CD4-positive, alpha-beta T cell (primary cell): ENCODE measurements at regions of chr5 and their contacts with region 1.

Region 1: GRCh38 chr5:180802325-180803180 is at the start of gene MGAT1:
- DNase-seq: peak; percentile 48 to 89 (median 70)
- ATAC-seq: peak; percentile 49
- H3K4me3 ChIP-seq: peak within 1 kb of the TSS; percentile 84
- H3K4me3 Mint-ChIP-seq: peak within 1 kb of the TSS; percentile 99
- H3K27ac ChIP-seq: peak within 1 kb of the TSS; percentile 84 to 87
- H3K27ac Mint-ChIP-seq: peak within 1 kb of the TSS; percentile 94
- H3K4me1 ChIP-seq: peaks cover 86% of the 10 kb centered on the region
- H3K4me1 Mint-ChIP-seq: peaks cover 89% of the 10 kb centered on the region
- H3K27me3 ChIP-seq: no peaks in the 10 kb centered on the region
- H3K27me3 Mint-ChIP-seq: no peaks in the 10 kb centered on the region
- CTCF ChIP-seq: no peak
- total RNA-seq, gene MGAT1: 49.0 to 60.2 TPM

Region 2: DNA sequence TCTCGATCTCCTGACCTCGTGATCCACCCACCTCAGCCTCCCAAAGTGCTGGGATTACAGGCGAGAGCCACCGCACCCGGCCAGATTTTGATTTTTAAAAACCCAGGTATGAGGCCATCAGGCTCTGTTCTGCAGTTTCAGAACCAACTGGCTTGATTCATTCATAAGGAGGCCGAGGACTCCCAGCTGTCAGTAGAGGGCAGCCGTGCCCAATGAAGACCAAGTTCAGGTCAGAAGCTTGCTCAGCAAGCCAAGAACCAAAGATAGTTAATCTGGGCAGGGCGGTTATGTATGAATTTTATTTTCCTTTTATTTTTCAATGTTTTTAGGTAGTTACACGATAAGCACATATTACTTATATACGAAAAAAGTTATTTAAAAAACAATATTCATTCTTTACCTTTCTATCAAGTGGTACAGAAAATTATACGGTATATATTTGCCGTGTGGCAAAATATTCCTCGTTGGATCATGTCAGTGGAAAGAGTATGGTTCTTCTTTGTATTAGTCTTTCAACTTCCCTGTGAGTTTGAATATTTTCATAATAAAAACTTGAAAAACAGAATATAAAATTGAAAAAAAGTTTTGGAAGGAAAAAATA is 18.0 kb before region 1 on chr5:
- CTCF ChIA-PET with region 1: interaction called, 10 read pairs
- POLR2A ChIA-PET with region 1: interaction called, 38 read pairs
- intact Hi-C with region 1: loop called (anchors 2 kb)
- DNase-seq: peak; percentile 59 to 86 (median 74)
- ATAC-seq: peak; percentile 90
- H3K4me3 ChIP-seq: no peak overlapping the region
- H3K4me3 Mint-ChIP-seq: no peak overlapping the region
- H3K27ac ChIP-seq: no peak overlapping the region
- H3K27ac Mint-ChIP-seq: peak overlapping the region; percentile 85
- H3K4me1 ChIP-seq: peaks cover 31% of the 10 kb centered on the region
- H3K4me1 Mint-ChIP-seq: peaks cover 45% of the 10 kb centered on the region
- H3K27me3 ChIP-seq: no peaks in the 10 kb centered on the region
- H3K27me3 Mint-ChIP-seq: no peaks in the 10 kb centered on the region
- CTCF ChIP-seq: peak; percentile 69

Region 3: DNA sequence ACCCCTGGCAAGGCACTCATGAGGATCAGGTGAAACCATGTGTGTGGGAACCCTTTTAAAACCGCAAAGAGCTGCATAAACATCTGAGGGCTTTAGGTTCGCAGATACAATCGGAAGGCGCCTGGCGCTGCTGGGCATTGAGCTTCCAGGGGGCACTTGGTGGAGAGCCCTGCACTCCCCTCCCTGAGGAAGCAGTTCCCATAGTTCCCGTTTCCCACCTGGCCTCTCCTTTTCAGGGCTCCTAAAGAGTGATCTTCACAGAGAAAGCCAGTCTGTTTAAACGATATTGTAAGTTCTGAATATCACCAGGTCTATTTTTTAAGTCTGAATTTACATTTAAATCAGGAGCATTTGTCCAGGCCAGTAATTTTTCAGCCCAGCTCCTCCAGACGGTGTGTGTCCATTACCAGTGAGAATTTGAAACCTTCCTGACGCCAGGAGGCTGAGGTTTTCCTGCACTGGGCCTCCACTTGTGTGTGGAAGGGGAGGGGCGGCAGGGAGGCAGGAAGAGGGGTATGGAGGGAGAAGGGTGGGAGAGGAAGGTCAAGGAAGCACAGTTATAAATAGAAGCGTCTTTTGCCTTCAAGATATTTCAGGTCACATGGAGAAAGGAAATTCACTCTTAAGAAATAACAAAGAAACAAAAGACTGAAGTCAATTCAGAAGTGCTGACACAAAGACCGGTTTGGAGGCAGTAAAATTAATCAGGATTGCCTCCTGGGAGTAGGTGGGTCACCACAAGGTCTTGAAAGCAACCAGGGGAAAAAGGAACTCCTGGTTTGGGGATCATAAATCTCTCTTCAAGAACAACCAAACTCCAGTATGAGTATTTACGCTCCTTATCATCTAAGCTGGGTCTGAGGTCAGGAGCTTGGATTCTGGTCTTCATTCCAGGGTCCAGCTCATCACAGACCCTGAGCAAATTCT is 14.3 kb after region 1 on chr5:
- CTCF ChIA-PET with region 1: interaction called, 5 read pairs
- POLR2A ChIA-PET with region 1: interaction called, 54 read pairs
- intact Hi-C with region 1: no loop called
- DNase-seq: peak in 3 of 14 experiments; percentile 31 to 59 (median 59)
- ATAC-seq: peak; percentile 71
- H3K4me3 ChIP-seq: peak overlapping the region; percentile 5
- H3K4me3 Mint-ChIP-seq: peak overlapping the region; percentile 79
- H3K27ac ChIP-seq: no peak overlapping the region
- H3K27ac Mint-ChIP-seq: peak overlapping the region; percentile 80
- H3K4me1 ChIP-seq: peaks cover 22% of the 10 kb centered on the region
- H3K4me1 Mint-ChIP-seq: peaks cover 50% of the 10 kb centered on the region
- H3K27me3 ChIP-seq: no peaks in the 10 kb centered on the region
- H3K27me3 Mint-ChIP-seq: no peaks in the 10 kb centered on the region
- CTCF ChIP-seq: no peak

Region 4: DNA sequence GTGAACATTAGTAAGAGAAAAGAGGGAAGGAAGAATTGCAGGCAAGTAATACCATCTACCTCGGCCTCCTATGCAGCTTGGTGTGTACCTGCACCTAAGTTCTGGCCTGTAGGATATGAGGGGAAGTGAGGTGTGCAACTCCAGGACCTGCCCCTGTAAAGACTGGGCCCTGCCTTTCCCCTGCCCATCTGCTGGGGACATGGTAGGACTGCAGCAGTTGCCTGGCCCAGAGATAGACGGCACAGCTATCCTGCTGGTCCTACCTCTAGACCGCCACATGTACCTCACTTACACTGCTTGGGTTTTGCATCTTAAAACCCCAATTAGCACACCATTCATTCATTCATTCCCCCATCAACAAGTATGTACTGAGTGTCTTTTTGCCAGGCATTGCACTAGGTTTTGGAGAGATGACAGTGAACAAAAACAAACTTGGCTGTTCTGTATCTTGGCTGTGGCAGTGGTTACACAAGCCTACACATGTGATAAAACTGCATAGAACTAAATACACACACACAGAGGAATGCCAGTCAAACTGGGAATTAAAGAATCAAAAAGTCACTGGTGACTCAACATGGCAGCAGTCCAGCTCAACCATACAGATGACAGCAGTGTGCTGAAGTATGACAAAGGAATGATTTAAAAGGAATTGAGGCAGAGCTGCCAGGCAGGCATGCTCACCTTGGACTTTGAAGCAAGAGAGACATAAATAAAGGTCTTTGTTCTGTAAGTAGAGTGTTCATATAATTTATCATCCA is 23.4 kb after region 1 on chr5:
- CTCF ChIA-PET with region 1: interaction called, 17 read pairs
- POLR2A ChIA-PET with region 1: interaction called, 612 read pairs
- intact Hi-C with region 1: loop called in 1 of 2 experiments (anchors 2 kb)
- DNase-seq: no peak
- ATAC-seq: no peak
- H3K4me3 ChIP-seq: no peak overlapping the region
- H3K4me3 Mint-ChIP-seq: no peak overlapping the region
- H3K27ac ChIP-seq: no peak overlapping the region
- H3K27ac Mint-ChIP-seq: peak overlapping the region; percentile 69
- H3K4me1 ChIP-seq: peaks cover 25% of the 10 kb centered on the region
- H3K4me1 Mint-ChIP-seq: peaks cover 53% of the 10 kb centered on the region
- H3K27me3 ChIP-seq: no peaks in the 10 kb centered on the region
- H3K27me3 Mint-ChIP-seq: no peaks in the 10 kb centered on the region
- CTCF ChIP-seq: no peak

Region 5: GRCh38 chr5:180860887-180861822 is 58.6 kb after region 1 on chr5 and contains the start of gene ZFP62:
- CTCF ChIA-PET with region 1: interaction called, 6 read pairs
- POLR2A ChIA-PET with region 1: interaction called, 50 read pairs
- intact Hi-C with region 1: loop called (anchors 2 kb)
- DNase-seq: peak; percentile 78 to 94 (median 85)
- ATAC-seq: peak; percentile 73
- H3K4me3 ChIP-seq: peak within 1 kb of the TSS; percentile 89
- H3K4me3 Mint-ChIP-seq: peak within 1 kb of the TSS; percentile 95
- H3K27ac ChIP-seq: peak within 1 kb of the TSS; percentile 85 to 88
- H3K27ac Mint-ChIP-seq: peak within 1 kb of the TSS; percentile 95
- H3K4me1 ChIP-seq: peaks cover 10% of the 10 kb centered on the region
- H3K4me1 Mint-ChIP-seq: peaks cover 27% of the 10 kb centered on the region
- H3K27me3 ChIP-seq: no peaks in the 10 kb centered on the region
- H3K27me3 Mint-ChIP-seq: peaks cover 5% of the 10 kb centered on the region
- CTCF ChIP-seq: peak; percentile 50
- total RNA-seq, gene ZFP62: 22.6 to 24.9 TPM